Natural killer cell (primary cell): ENCODE measurements at regions of chr9 and their contacts with region 1.

Region 1: DNA sequence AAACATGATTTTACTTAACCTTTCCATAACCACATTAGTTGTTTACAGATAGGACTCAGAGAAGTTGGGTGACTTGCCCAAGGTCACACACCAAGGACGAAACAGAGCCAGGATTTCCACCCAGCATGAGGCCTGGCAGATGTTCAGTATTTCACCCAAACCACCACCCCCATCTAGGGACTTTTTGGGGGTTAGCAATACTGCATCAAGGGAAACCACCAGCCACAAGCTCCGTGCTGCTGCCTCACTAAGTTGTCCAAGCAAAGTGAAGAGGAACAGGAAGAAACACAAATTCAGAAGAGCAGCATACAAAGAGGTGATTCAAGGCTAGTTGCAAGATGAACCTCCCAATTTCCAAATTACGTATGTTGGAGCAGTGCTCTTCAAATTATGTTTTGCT is 219.6 kb upstream of the RORB start:
- DNase-seq: peak; percentile 51 to 72
- ATAC-seq: peak; percentile 90 to 97 (median 95)
- H3K4me3 ChIP-seq: no peak overlapping the region
- H3K4me3 Mint-ChIP-seq: no peak overlapping the region
- H3K27ac ChIP-seq: peak overlapping the region; percentile 25
- H3K27ac Mint-ChIP-seq: peak overlapping the region; percentile 29 to 80
- H3K4me1 ChIP-seq: peaks cover 10% of the 10 kb centered on the region
- H3K4me1 Mint-ChIP-seq: peaks cover 8 to 23% of the 10 kb centered on the region in 2 donors
- H3K27me3 ChIP-seq: no peaks in the 10 kb centered on the region
- H3K27me3 Mint-ChIP-seq: no peaks in the 10 kb centered on the region
- CTCF ChIP-seq: peak; percentile 26

Region 2: DNA sequence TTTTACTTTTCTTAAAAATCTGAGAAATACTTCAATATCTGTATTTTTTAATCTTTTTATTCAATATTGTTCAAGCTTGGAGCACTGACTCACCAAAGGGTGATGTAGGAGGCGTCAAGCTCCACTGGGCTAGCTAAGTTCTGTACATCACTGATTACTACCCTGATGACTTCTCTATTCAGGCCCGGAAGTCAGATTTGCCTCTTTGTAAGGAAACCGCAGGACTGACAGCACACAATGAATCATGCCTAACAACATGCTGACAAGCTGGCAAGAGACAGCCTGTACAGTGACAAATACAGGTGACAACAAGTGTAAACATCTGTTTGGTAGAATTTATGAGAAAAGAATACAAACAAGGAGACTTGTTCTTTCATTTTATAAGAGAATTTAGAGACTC is 408.3 kb before region 1 on chr9:
- intact Hi-C with region 1: loop called (anchors 10 kb)
- DNase-seq: peak; percentile 33 to 57
- ATAC-seq: peak; percentile 97 to 98 (median 98)
- H3K4me3 ChIP-seq: no peak overlapping the region
- H3K4me3 Mint-ChIP-seq: no peak overlapping the region
- H3K27ac ChIP-seq: no peak overlapping the region
- H3K27ac Mint-ChIP-seq: peak overlapping the region in 1 of 2 donors; percentile 71
- H3K4me1 ChIP-seq: peaks cover 3% of the 10 kb centered on the region
- H3K4me1 Mint-ChIP-seq: peaks cover 0 to 11% of the 10 kb centered on the region in 2 donors
- H3K27me3 ChIP-seq: no peaks in the 10 kb centered on the region
- H3K27me3 Mint-ChIP-seq: peaks cover 7 to 9% of the 10 kb centered on the region in 2 donors
- CTCF ChIP-seq: no peak

Region 3: DNA sequence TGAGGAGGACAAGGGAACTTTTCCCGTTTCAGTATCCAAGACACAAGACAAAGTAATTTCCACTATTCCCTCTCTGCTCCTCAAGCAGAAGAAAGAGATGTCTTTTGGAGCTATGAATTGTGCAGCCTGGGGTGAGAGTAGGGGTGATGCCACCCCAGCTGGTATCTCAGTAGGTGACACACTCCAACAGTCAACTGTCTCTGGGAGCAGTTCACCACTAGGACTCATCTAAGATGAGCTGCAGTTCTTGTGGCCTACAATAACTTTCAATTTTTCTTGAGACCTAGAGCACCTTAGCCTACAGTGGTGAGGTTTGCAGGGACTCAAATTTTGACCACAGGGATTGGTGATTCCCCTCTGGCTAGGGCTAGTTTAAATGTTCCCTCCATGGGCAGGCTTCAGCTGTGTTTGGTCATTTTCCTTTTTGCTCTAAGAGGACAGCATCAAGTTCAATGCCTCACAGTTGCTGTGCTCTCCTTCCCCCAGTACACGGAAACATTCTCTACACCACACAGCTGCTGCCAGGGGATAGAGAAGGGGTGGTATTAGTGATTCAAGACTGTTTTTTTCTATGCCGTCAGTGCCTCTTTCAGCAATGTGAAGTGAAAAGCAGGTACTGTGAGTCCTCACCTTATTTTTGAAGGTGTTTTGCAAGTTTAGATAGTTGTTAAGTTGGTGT is 59.0 kb before region 1 on chr9:
- intact Hi-C with region 1: no loop called
- DNase-seq: peak in 1 of 2 donors; percentile 4
- ATAC-seq: peak in 1 of 3 donors; percentile 38
- H3K4me3 ChIP-seq: no peak overlapping the region
- H3K4me3 Mint-ChIP-seq: no peak overlapping the region
- H3K27ac ChIP-seq: no peak overlapping the region
- H3K27ac Mint-ChIP-seq: no peak overlapping the region
- H3K4me1 ChIP-seq: no peaks in the 10 kb centered on the region
- H3K4me1 Mint-ChIP-seq: peaks cover 0 to 5% of the 10 kb centered on the region in 2 donors
- H3K27me3 ChIP-seq: no peaks in the 10 kb centered on the region
- H3K27me3 Mint-ChIP-seq: peaks cover 0 to 4% of the 10 kb centered on the region in 2 donors
- CTCF ChIP-seq: no peak

Region 4: GRCh38 chr9:74303945-74304344 is 26.4 kb after region 1 on chr9:
- intact Hi-C with region 1: no loop called
- DNase-seq: no peak
- ATAC-seq: no peak
- H3K4me3 ChIP-seq: no peak overlapping the region
- H3K4me3 Mint-ChIP-seq: no peak overlapping the region
- H3K27ac ChIP-seq: no peak overlapping the region
- H3K27ac Mint-ChIP-seq: no peak overlapping the region
- H3K4me1 ChIP-seq: no peaks in the 10 kb centered on the region
- H3K4me1 Mint-ChIP-seq: no peaks in the 10 kb centered on the region
- H3K27me3 ChIP-seq: no peaks in the 10 kb centered on the region
- H3K27me3 Mint-ChIP-seq: no peaks in the 10 kb centered on the region
- CTCF ChIP-seq: no peak

Region 5: DNA sequence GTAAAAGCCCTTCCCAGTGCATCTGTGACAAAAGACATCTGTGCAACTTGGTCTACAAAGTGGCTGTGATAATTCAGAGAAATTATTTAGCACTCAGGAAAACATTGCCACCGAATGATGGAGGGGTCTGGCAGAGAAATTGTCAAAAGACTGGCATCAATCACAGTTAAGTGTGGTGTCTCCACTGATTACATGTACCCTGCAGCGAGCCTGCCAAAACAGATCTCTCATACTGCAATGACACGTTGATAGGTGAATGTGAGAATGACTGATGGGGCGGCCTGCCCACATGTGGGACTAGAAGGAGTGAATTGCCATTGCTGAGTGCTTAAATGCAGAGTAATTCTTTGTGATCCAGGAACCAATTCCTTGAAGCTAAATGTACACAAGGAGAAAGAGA is 1476.5 kb after region 1 on chr9:
- intact Hi-C with region 1: no loop called
- DNase-seq: no peak
- ATAC-seq: no peak
- H3K4me3 ChIP-seq: no peak overlapping the region
- H3K4me3 Mint-ChIP-seq: no peak overlapping the region
- H3K27ac ChIP-seq: no peak overlapping the region
- H3K27ac Mint-ChIP-seq: no peak overlapping the region
- H3K4me1 ChIP-seq: no peaks in the 10 kb centered on the region
- H3K4me1 Mint-ChIP-seq: no peaks in the 10 kb centered on the region
- H3K27me3 ChIP-seq: no peaks in the 10 kb centered on the region
- H3K27me3 Mint-ChIP-seq: no peaks in the 10 kb centered on the region
- CTCF ChIP-seq: no peak